ENCODE measurements at regions of chr17 and their contacts with region 1.

Region 1: DNA sequence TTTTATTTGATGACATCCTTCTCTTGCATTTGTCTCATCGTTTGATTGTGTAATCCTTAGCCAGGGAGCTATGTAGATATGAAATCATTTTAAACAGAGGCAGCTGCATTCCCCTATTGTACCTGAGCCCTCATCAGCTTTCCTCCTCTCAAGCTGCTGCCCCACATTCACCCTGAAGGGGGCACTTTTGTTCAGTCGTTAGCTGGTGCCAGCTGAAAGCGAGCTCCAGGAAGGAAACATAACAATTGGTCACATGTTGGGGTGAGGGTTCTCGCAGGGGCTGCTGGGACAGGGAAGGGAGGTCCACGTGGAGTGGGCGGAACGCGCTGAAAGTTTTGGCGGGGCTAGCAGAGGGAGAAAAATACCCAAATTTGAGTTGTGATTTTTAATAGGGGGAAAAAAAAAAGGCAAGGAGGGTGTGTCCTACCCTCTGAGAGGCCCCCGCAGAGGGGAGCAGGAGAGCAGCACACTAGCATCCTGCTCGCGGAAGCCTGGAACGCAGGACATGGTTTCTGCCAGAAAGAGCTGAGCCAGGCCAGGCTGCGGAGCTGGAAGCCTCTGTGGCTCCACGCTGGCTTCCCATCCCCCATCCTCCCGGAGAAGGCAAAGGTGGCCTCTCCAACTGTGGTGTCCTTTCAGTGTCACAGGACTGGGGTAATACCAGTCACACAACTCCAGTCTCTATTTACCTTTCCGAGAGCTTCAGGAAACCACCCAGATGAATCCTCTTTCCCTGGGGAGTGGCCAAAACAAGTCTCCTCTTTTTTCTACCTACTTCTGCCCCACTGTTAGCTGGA is 8.5 kb upstream of the MSL1 start:
- DNase-seq: peak; percentile 95
- H3K4me3 Mint-ChIP-seq: peak overlapping the region; percentile 76
- H3K27ac Mint-ChIP-seq: peak overlapping the region; percentile 68
- H3K4me1 Mint-ChIP-seq: peaks cover 57% of the 10 kb centered on the region
- H3K27me3 Mint-ChIP-seq: no peaks in the 10 kb centered on the region

Region 2: DNA sequence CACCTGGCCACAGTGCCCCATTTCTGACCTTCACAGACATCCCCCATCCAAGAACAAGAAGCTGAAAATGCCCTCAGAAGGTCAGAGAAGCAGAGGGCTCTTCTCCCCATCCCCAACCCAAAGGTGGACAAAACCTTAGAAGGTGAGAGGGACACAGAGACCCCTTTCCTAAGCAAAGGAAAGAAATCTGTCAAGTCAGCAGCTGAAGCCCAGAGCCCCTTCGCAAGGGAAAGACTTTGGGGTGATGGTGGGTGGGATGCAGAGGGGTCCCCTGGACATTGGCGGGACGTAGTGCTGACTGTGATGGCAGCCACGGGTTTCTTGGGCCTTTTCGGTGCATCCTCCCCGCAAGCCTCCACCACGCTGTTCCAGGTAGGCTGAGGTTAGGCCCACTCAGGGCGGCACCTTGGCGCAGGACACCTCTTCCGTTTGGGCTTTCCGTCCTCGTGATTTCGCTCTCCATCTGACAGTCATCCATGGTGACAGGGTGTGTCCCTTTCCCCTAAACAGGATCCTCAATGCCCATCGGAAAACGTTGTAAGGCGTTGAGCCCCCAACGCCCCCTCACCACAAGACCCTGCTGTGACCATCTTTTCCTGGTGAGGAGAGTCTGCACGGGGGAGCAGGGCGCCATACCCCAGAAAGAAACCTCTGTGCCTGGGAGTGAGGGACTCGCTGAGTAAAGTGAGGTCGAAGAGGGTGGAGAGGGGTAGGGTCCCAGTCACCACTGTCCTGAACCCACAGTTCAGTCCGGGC is 161.2 kb before region 1 on chr17:
- CTCF ChIA-PET with region 1: no interaction called
- POLR2A ChIA-PET with region 1: no interaction called
- DNase-seq: no peak
- H3K4me3 Mint-ChIP-seq: peak overlapping the region; percentile 50
- H3K27ac Mint-ChIP-seq: no peak overlapping the region
- H3K4me1 Mint-ChIP-seq: peaks cover 14% of the 10 kb centered on the region
- H3K27me3 Mint-ChIP-seq: peaks cover 11% of the 10 kb centered on the region

Region 3: GRCh38 chr17:40026816-40027613 is 86.3 kb before region 1 on chr17:
- CTCF ChIA-PET with region 1: interaction called, 14 read pairs
- POLR2A ChIA-PET with region 1: no interaction called
- DNase-seq: peak; percentile 81
- H3K4me3 Mint-ChIP-seq: no peak overlapping the region
- H3K27ac Mint-ChIP-seq: no peak overlapping the region
- H3K4me1 Mint-ChIP-seq: peaks cover 25% of the 10 kb centered on the region
- H3K27me3 Mint-ChIP-seq: no peaks in the 10 kb centered on the region

Region 4: DNA sequence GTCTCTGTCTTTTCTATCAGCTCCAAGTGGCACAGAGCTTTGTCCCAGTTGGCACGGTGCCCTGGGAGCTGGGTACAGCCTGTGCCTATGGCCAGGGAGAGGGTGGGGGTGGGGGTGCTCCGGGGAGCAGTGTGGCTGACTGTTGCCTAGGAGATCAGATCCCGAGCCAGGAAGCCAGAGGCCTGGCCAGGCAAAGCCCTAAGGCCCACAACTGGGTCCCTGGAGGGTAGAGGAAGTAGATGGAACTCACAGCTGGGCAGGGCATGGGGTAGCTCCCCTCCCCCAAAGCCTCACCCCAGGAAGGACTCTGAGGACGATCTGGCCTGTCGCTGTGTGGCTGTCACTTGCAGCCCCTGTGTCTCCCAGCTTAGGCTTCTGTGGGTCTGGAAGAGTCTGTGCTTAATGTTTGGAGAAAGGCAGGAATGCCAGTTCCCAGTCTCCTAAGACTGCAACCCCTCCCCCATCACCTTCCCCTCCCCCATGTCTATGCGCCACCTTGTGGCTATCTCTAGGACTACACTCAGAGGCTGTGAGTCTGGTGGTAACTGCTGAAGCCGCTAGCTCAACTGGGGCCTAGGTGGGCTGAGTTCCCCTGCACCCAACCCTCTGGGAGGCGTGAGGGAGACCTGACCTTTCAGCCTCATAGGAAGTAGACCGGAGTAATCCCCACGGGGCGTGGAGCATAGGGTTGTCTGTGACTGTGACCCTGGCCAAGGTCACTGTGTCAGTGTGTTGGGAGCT is 37.9 kb before region 1 on chr17:
- CTCF ChIA-PET with region 1: interaction called, 49 read pairs
- POLR2A ChIA-PET with region 1: interaction called, 7 read pairs
- DNase-seq: peak; percentile 67
- H3K4me3 Mint-ChIP-seq: no peak overlapping the region
- H3K27ac Mint-ChIP-seq: peak overlapping the region; percentile 19
- H3K4me1 Mint-ChIP-seq: peaks cover 12% of the 10 kb centered on the region
- H3K27me3 Mint-ChIP-seq: no peaks in the 10 kb centered on the region

Region 5: GRCh38 chr17:40139566-40140058 is 26.3 kb after region 1 on chr17:
- CTCF ChIA-PET with region 1: interaction called, 12 read pairs
- POLR2A ChIA-PET with region 1: interaction called, 40 read pairs
- DNase-seq: no peak
- H3K4me3 Mint-ChIP-seq: peak overlapping the region; percentile 82
- H3K27ac Mint-ChIP-seq: peak overlapping the region; percentile 94
- H3K4me1 Mint-ChIP-seq: peaks cover 29% of the 10 kb centered on the region
- H3K27me3 Mint-ChIP-seq: no peaks in the 10 kb centered on the region

Region 6: GRCh38 chr17:40177275-40177874 is 64.1 kb after region 1 on chr17 and contains the start of gene RAPGEFL1:
- CTCF ChIA-PET with region 1: interaction called, 13 read pairs
- POLR2A ChIA-PET with region 1: interaction called, 3 read pairs
- DNase-seq: peak; percentile 84
- H3K4me3 Mint-ChIP-seq: peak within 1 kb of the TSS; percentile 30
- H3K27ac Mint-ChIP-seq: no peak within 1 kb of the TSS
- H3K4me1 Mint-ChIP-seq: peaks cover 7% of the 10 kb centered on the region
- H3K27me3 Mint-ChIP-seq: no peaks in the 10 kb centered on the region
- total RNA-seq, gene RAPGEFL1: 4.7 to 6.0 TPM

Region 7: GRCh38 chr17:40287494-40288369 is 174.4 kb after region 1 on chr17 and contains the start of gene CDC6:
- CTCF ChIA-PET with region 1: interaction called, 16 read pairs
- POLR2A ChIA-PET with region 1: interaction called, 9 read pairs
- DNase-seq: peak; percentile 99
- H3K4me3 Mint-ChIP-seq: peak within 1 kb of the TSS; percentile 99
- H3K27ac Mint-ChIP-seq: peak within 1 kb of the TSS; percentile 97
- H3K4me1 Mint-ChIP-seq: peaks cover 60% of the 10 kb centered on the region
- H3K27me3 Mint-ChIP-seq: no peaks in the 10 kb centered on the region
- total RNA-seq, gene CDC6: 67.5 to 69.9 TPM

Measured in activated CD4-positive, alpha-beta memory T cell treated with anti-CD3 and anti-CD28 coated beads, Interleukin-2, amount 10 ng/mL, durations not matched to agents 7 days and 5 days (primary cell).